ENCODE measurements at regions of chr17 and their contacts with region 1.

Region 1: DNA sequence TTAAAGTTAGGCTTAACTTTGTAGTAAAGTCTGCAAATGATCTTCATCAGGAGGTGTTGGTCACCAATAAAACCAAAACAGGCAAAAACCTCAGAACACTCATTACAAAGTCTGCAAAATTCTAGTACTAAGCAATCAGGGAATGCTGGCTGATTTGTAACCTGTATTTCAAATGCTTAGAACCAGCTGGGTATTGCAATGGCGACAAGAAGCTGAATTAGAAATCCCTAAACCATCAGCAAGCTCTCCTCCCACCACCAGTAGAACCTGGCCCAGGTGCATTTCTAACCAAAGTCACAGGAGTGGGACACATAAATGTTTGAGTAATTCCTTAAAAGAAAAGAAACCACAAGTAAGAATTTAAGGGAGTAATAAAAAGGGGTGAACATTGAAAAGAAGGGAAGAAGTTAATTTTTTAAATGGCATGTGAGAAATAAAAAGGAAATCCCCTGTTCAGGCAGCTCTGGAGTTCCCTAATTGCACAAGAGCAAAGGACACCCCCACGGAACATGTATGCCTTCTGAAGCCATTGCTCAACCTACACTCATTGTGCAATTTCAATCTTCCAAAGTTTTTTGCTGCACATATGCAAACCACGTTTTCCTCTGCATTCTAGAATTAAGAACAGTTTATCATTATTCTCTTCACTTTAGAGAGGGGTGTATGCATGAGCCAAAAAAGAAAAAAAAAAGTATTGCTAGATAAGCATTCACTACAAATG is 102.9 kb downstream of the HIC1 start:
- H3K4me3 Mint-ChIP-seq: peak overlapping the region; percentile 40
- H3K27ac Mint-ChIP-seq: peak overlapping the region; percentile 76
- H3K4me1 Mint-ChIP-seq: peaks cover 43% of the 10 kb centered on the region
- H3K27me3 Mint-ChIP-seq: no peaks in the 10 kb centered on the region

Region 2: GRCh38 chr17:2054512-2055291 is 103.1 kb before region 1 on chr17 and contains the start of gene HIC1:
- intact Hi-C with region 1: loop called (anchors 5 kb)
- H3K4me3 Mint-ChIP-seq: peak within 1 kb of the TSS; percentile 49
- H3K27ac Mint-ChIP-seq: no peak within 1 kb of the TSS
- H3K4me1 Mint-ChIP-seq: peaks cover 41% of the 10 kb centered on the region
- H3K27me3 Mint-ChIP-seq: peaks cover 52% of the 10 kb centered on the region

Region 3: DNA sequence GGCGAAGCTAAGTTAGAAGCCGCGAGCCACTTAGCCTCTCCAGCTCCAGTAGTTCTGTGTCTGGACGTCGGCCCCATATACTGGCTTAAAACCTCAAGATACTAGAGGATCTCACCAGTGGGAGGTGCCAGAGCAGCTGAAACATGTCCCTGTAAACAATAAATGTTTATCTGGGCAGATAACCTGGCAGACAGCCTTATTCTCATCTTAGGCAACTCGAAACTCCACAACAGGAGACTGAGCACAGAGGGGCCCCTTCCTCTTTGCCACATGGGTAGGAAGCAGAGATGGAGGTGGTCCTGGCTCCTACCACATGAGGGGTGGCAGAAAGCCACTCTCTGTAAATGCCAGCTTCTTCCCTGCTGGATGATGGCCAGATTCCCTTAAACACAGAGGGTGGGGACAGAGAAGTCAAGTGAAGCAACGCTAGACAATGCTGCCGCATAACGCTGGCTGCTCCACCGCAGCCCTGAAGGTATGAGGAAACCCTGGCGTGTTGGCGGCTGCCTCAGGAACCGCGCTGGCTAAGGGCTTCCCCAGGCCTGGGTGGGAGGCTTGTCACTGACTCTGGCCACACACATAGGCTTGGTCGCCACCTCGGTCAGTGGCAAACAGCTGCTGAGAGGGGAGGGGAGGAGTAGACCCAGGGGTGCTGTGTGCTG is 35.1 kb before region 1 on chr17:
- intact Hi-C with region 1: loop called (anchors 1 kb)
- H3K4me3 Mint-ChIP-seq: peak overlapping the region; percentile 62
- H3K27ac Mint-ChIP-seq: peak overlapping the region; percentile 90
- H3K4me1 Mint-ChIP-seq: peaks cover 65% of the 10 kb centered on the region
- H3K27me3 Mint-ChIP-seq: no peaks in the 10 kb centered on the region

Measured in dendritic cell treated with granulocyte-macrophage colony-stimulating factor and Interleukin-4, amounts not matched to agents 40 ng/mL and 50 ng/mL, for 4 days (primary cell).